Calu3 (cell line): ENCODE measurements at regions of chr21 and their contacts with region 1.

Region 1: GRCh38 chr21:19776076-19776475 is 1222.1 kb upstream of the NCAM2 start:
- DNase-seq: no peak
- H3K4me3 Mint-ChIP-seq: no peak overlapping the region
- H3K27ac Mint-ChIP-seq: no peak overlapping the region
- H3K4me1 Mint-ChIP-seq: no peaks in the 10 kb centered on the region
- H3K27me3 Mint-ChIP-seq: no peaks in the 10 kb centered on the region
- CTCF ChIP-seq: no peak

Region 2: GRCh38 chr21:19712441-19712840 is 63.6 kb before region 1 on chr21:
- CTCF ChIA-PET with region 1: no interaction called
- intact Hi-C with region 1: loop called (anchors 10 kb)
- DNase-seq: no peak
- H3K4me3 Mint-ChIP-seq: no peak overlapping the region
- H3K27ac Mint-ChIP-seq: no peak overlapping the region
- H3K4me1 Mint-ChIP-seq: no peaks in the 10 kb centered on the region
- H3K27me3 Mint-ChIP-seq: no peaks in the 10 kb centered on the region
- CTCF ChIP-seq: no peak

Region 3: GRCh38 chr21:19833082-19833481 is 57.0 kb after region 1 on chr21:
- CTCF ChIA-PET with region 1: no interaction called
- intact Hi-C with region 1: no loop called
- DNase-seq: no peak
- H3K4me3 Mint-ChIP-seq: no peak overlapping the region
- H3K27ac Mint-ChIP-seq: no peak overlapping the region
- H3K4me1 Mint-ChIP-seq: no peaks in the 10 kb centered on the region
- H3K27me3 Mint-ChIP-seq: no peaks in the 10 kb centered on the region
- CTCF ChIP-seq: no peak

Region 4: GRCh38 chr21:19914028-19914427 is 138.0 kb after region 1 on chr21:
- CTCF ChIA-PET with region 1: no interaction called
- intact Hi-C with region 1: no loop called
- DNase-seq: no peak
- H3K4me3 Mint-ChIP-seq: no peak overlapping the region
- H3K27ac Mint-ChIP-seq: no peak overlapping the region
- H3K4me1 Mint-ChIP-seq: no peaks in the 10 kb centered on the region
- H3K27me3 Mint-ChIP-seq: no peaks in the 10 kb centered on the region
- CTCF ChIP-seq: no peak